Ascending aorta (tissue), 2 donors: ENCODE measurements at regions of chr1 and their contacts with region 1.

Region 1: DNA sequence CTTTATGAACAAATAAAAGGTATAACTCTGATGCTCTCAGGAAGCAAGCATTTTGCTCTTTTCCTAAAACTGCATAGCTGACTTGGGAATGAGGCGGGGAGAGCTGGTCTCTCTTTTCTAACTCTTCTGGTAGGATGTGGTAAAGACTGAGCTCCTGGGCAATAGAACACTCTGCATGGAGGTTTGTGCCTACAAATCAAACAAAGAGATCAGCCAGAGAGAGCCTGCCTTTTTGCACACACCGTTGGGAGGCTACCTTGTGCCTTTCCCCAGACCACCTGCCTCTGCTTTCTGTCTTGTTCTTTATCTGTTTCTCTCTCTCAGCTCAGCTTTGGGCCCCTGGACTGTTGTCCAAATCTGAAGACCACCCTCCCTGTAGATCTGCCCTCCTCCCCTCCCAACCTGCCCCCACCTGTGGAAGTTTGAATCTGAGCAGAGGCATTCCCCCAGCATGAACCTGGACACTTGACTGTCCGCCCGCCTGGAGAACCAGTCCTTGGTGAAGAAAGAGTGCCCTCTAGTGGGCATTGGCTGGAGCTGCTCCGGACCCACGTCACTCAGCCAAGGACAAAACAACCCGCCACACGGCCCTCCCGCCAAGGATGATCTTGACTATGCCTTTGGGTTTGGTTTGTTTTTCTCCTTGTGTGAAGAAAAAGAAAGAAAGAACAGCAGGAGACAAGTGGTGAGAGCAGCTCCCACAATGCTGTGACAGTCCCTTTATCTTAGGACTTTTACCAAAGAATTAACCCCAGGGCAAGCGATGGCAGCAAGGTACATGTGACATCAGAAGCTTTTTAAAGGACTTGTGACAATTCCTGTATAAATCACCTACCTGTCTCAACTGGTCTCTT is 228.2 kb downstream of the PBX1 start:
- DNase-seq: peak in 1 of 2 donors; percentile 88
- H3K4me3 ChIP-seq: no peak overlapping the region
- H3K27ac ChIP-seq: no peak overlapping the region
- H3K4me1 ChIP-seq: peaks cover 0 to 38% of the 10 kb centered on the region in 2 donors
- H3K27me3 ChIP-seq: no peaks in the 10 kb centered on the region
- CTCF ChIP-seq: peak; percentile 82 to 96 (median 93)

Region 2: DNA sequence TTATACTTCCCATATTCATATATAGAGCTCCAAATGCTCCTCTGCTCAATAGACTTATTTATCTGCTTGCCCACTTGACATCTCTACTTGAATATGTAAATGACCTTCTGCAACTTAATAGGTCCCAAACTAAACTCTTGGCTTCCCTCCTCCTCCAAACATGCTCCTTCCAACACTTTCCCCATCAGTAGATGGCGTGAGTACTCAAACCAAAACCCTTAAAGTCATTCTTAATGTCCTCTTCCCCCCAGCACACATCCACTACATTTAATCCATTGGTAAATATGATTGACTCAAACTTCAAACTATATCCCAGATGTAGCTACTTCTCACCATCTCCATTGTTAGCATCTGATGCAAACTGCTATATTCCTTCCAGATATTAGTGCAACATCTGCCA is 276.8 kb before region 1 on chr1:
- intact Hi-C with region 1: loop called (anchors 2 kb)
- DNase-seq: no peak
- H3K4me3 ChIP-seq: no peak overlapping the region
- H3K27ac ChIP-seq: no peak overlapping the region
- H3K4me1 ChIP-seq: no peaks in the 10 kb centered on the region
- H3K27me3 ChIP-seq: no peaks in the 10 kb centered on the region
- CTCF ChIP-seq: no peak

Region 3: GRCh38 chr1:164576291-164577271 is 210.6 kb before region 1 on chr1:
- intact Hi-C with region 1: loop called (anchors 5 kb)
- DNase-seq: peak in 1 of 2 donors; percentile 69
- H3K4me3 ChIP-seq: peak overlapping the region; percentile 47 to 67
- H3K27ac ChIP-seq: peak overlapping the region; percentile 74 to 84
- H3K4me1 ChIP-seq: peaks cover 0 to 52% of the 10 kb centered on the region in 2 donors
- H3K27me3 ChIP-seq: no peaks in the 10 kb centered on the region
- CTCF ChIP-seq: peak in 1 of 3 experiments; percentile 25

Region 4: GRCh38 chr1:164683235-164683634 is 104.0 kb before region 1 on chr1:
- intact Hi-C with region 1: no loop called
- DNase-seq: no peak
- H3K4me3 ChIP-seq: no peak overlapping the region
- H3K27ac ChIP-seq: no peak overlapping the region
- H3K4me1 ChIP-seq: peaks cover 0 to 2% of the 10 kb centered on the region in 2 donors
- H3K27me3 ChIP-seq: no peaks in the 10 kb centered on the region
- CTCF ChIP-seq: no peak

Region 5: GRCh38 chr1:164754088-164754600 is 33.1 kb before region 1 on chr1:
- intact Hi-C with region 1: loop called (anchors 5 kb)
- DNase-seq: peak in 1 of 2 donors; percentile 78
- H3K4me3 ChIP-seq: peak overlapping the region; percentile 4 to 45
- H3K27ac ChIP-seq: peak overlapping the region; percentile 84
- H3K4me1 ChIP-seq: peaks cover 0 to 13% of the 10 kb centered on the region in 2 donors
- H3K27me3 ChIP-seq: no peaks in the 10 kb centered on the region
- CTCF ChIP-seq: no peak